HEK293T (cell line): ENCODE measurements at regions of chr2 and their contacts with region 1.

Region 1: GRCh38 chr2:218659258-218659987 is at the starts of genes BCS1L and ZNF142:
- DNase-seq: peak; percentile 90

Region 2: GRCh38 chr2:218482651-218483050 is 176.8 kb before region 1 on chr2:
- CTCF ChIA-PET with region 1: no interaction called
- POLR2A ChIA-PET with region 1: no interaction called
- DNase-seq: no peak

Region 3: GRCh38 chr2:218671654-218672566 is 12.5 kb after region 1 on chr2 and contains the starts of genes RNF25 and STK36:
- CTCF ChIA-PET with region 1: interaction called, 4 read pairs
- POLR2A ChIA-PET with region 1: interaction called, 39 read pairs
- DNase-seq: peak; percentile 94